Prostate gland (tissue), 2 donors: ENCODE measurements at regions of chr10 and their contacts with region 1.

Region 1: DNA sequence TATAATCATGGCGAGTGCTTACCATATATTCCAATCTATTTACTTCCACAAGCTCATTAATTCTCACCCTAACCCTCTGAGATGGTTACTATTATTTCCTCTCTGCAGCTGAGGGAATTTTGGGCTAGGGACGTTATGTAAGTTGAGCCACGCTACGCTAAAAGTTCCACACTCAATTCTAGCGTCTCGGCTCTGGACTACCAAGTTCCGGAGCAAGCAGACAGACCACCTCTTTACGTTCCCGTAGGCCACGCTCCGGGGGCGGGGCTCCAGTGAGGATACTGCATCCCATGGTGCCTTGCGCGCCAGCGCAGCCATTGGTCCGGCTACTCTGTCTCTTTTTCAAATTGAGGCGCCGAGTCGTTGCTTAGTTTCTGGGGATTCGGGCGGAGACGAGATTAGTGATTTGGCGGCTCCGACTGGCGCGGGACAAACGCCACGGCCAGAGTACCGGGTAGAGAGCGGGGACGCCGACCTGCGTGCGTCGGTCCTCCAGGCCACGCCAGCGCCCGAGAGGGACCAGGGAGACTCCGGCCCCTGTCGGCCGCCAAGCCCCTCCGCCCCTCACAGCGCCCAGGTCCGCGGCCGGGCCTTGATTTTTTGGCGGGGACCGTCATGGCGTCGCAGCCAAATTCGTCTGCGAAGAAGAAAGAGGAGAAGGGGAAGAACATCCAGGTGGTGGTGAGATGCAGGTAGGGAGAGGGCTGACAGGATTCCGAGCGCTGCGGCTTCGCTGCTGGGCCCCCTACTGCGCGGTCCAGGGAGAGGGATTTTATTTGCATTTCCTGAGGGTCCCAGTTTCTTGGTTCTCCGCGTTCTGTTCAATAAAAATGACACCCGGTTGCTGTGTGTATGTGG is at the start of gene KIF11:
- DNase-seq: peak; percentile 97
- H3K4me3 ChIP-seq: peak within 1 kb of the TSS; percentile 45 to 58
- H3K27ac ChIP-seq: peak within 1 kb of the TSS; percentile 85 to 90
- H3K4me1 ChIP-seq: peaks cover 7% of the 10 kb centered on the region
- H3K27me3 ChIP-seq: no peaks in the 10 kb centered on the region
- CTCF ChIP-seq: peak in 1 of 4 experiments; percentile 8
- POLR2A ChIP-seq: peak; percentile 84
- total RNA-seq, gene KIF11: 3.0 to 5.5 TPM

Region 2: GRCh38 chr10:92200564-92200963 is 392.4 kb before region 1 on chr10:
- intact Hi-C with region 1: no loop called
- DNase-seq: no peak
- H3K4me3 ChIP-seq: no peak overlapping the region
- H3K27ac ChIP-seq: no peak overlapping the region
- H3K4me1 ChIP-seq: no peaks in the 10 kb centered on the region
- H3K27me3 ChIP-seq: no peaks in the 10 kb centered on the region
- CTCF ChIP-seq: no peak
- POLR2A ChIP-seq: no peak

Region 3: DNA sequence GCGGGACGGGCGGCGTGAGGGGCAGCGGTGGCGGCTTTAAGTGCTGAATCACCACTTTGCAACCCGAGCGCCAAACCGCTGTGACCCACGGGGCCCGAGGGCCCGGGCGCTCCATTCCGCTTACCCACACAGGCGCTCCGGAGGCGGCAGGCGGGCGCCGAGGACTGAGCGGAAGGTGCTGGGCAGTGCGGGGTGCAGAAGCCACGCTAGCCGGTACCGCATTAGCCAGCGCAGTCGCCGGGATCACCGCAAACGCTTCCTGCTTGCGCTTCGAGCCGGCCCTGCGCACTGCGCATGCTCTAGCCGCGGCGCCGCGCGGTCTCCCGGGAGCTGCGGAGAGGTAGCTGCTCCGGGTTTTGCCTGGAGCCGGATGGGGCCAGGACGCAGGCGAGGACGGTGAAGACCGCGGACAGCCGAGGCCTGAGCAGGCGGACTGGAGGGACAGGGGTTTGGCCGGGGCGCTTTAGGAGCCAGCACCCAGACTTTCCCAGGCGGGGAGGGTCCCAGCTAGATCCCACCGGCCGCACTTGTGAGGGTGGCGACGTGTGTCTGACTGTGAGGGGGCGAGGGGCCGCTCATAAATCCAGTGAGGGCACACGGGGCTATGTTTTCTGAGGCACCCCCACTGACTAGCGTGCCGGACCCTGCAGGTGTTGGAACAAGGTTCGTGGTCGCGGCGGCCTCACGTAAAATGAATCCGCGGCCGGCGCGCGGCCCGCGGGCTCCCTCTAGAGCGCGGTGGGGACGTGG is 19.0 kb before region 1 on chr10 and contains the start of gene IDE:
- intact Hi-C with region 1: loop called (anchors 1 kb)
- DNase-seq: peak; percentile 84
- H3K4me3 ChIP-seq: peak within 1 kb of the TSS; percentile 81 to 88
- H3K27ac ChIP-seq: peak within 1 kb of the TSS; percentile 94 to 97
- H3K4me1 ChIP-seq: no peaks in the 10 kb centered on the region
- H3K27me3 ChIP-seq: no peaks in the 10 kb centered on the region
- CTCF ChIP-seq: peak; percentile 61 to 83 (median 73)
- POLR2A ChIP-seq: peak; percentile 35
- total RNA-seq, gene IDE: 23.7 to 38.0 TPM

Region 4: GRCh38 chr10:92689663-92690210 is 96.7 kb after region 1 on chr10 and contains the start of gene HHEX:
- intact Hi-C with region 1: loop called (anchors 5 kb)
- DNase-seq: peak; percentile 55
- H3K4me3 ChIP-seq: peak within 1 kb of the TSS; percentile 50 to 65
- H3K27ac ChIP-seq: peak within 1 kb of the TSS; percentile 73 to 77
- H3K4me1 ChIP-seq: no peaks in the 10 kb centered on the region
- H3K27me3 ChIP-seq: no peaks in the 10 kb centered on the region
- CTCF ChIP-seq: no peak
- POLR2A ChIP-seq: peak; percentile 46
- total RNA-seq, gene HHEX: 3.0 to 6.6 TPM

Region 5: DNA sequence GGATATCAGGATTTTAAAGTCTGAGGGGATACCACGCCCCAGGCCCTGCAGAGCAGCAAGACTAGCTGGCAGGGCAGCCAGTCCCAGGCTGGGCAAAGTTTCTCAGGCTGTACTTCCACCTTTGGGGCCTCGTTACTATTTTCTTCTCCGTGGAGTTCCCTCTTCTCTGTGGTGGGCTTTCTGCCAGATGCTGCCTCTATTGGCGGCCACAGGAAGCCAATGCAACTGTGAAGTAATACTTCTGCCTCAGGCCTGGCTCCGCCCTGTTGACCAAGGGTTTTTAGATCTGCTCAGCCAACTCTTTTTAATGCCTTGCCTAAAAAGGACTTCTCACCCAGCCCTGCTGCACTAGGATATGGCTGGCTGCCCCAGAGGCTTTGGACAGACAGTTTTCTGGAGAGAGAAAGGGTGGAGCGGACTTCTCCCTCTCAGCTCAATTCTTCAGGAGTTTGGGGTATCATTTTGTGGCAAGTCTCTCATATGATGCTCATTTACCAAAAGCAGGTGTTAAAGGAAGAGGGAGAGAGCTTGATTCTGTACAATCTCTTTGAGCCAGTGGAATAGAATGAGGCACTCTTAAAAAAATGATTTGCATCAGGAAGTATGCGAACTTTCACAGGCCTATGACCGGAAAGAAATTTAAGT is 164.2 kb after region 1 on chr10:
- intact Hi-C with region 1: loop called (anchors 5 kb)
- DNase-seq: peak; percentile 61
- H3K4me3 ChIP-seq: no peak overlapping the region
- H3K27ac ChIP-seq: peak overlapping the region; percentile 30 to 41
- H3K4me1 ChIP-seq: no peaks in the 10 kb centered on the region
- H3K27me3 ChIP-seq: no peaks in the 10 kb centered on the region
- CTCF ChIP-seq: peak in 1 of 4 experiments; percentile 25
- POLR2A ChIP-seq: no peak

Region 6: GRCh38 chr10:92830478-92831389 is 237.7 kb after region 1 on chr10:
- intact Hi-C with region 1: no loop called
- DNase-seq: no peak
- H3K4me3 ChIP-seq: no peak overlapping the region
- H3K27ac ChIP-seq: no peak overlapping the region
- H3K4me1 ChIP-seq: no peaks in the 10 kb centered on the region
- H3K27me3 ChIP-seq: no peaks in the 10 kb centered on the region
- CTCF ChIP-seq: no peak
- POLR2A ChIP-seq: no peak

Region 7: DNA sequence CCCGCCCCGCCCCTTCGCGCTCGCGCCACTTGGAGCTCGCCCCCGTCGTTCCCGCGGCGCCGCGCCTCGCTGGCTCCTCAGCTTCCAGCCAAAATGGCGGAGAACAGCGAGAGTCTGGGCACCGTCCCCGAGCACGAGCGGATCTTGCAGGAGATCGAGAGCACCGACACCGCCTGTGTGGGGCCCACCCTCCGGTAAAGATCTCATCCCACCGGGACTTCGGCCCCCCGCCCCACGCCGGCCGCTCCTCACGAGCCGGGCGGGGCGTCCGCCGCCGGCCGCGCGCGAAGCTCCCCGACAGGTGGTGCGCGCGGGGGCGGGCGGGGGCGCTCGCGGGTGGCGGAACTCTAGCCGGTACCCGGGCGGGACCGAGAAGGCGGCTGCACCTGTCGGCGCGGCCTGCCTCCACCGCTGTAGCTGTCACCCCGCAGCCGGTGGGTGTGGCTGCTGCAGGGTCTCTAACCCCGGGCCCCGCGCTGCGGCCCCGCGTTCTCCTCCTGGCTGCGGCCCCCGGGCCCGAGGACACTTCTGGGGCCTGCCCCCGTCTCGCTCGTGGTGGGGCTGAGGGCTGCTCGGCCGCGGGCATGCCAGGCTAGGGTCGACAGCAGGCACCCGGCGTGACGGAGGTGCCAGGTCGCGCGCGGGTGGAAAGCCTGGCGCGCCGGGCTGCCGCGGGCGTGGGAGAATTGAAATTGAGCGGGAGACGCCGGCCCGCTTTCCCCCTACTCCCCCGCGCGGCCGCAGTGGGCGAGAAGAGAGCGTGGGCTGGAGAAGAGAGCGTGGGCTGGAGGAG is 255.6 kb after region 1 on chr10 and contains the start of gene EXOC6:
- intact Hi-C with region 1: loop called (anchors 5 kb)
- DNase-seq: peak; percentile 73
- H3K4me3 ChIP-seq: peak within 1 kb of the TSS; percentile 80 to 95
- H3K27ac ChIP-seq: peak within 1 kb of the TSS; percentile 83 to 91
- H3K4me1 ChIP-seq: no peaks in the 10 kb centered on the region
- H3K27me3 ChIP-seq: no peaks in the 10 kb centered on the region
- CTCF ChIP-seq: peak in 1 of 4 experiments; percentile 32
- POLR2A ChIP-seq: no peak
- total RNA-seq, gene EXOC6: 13.5 to 598 TPM

Region 8: GRCh38 chr10:92880233-92880861 is 287.4 kb after region 1 on chr10:
- intact Hi-C with region 1: loop called (anchors 2 kb)
- DNase-seq: peak; percentile 6
- H3K4me3 ChIP-seq: no peak overlapping the region
- H3K27ac ChIP-seq: no peak overlapping the region
- H3K4me1 ChIP-seq: no peaks in the 10 kb centered on the region
- H3K27me3 ChIP-seq: no peaks in the 10 kb centered on the region
- CTCF ChIP-seq: peak in 3 of 4 experiments; percentile 18 to 49 (median 41)
- POLR2A ChIP-seq: no peak